K562 (cell line): ENCODE measurements at regions of chr10 and their contacts with region 1.

Region 1: GRCh38 chr10:931416-932318 is at the start of gene LARP4B:
- DNase-seq: peak; percentile 94 to 98 (median 97)
- ATAC-seq: peak; percentile 97
- H3K4me3 ChIP-seq: peak within 1 kb of the TSS; percentile 97
- H3K27ac ChIP-seq: peak within 1 kb of the TSS; percentile 85
- H3K4me1 ChIP-seq: peaks cover 18 to 21% of the 10 kb centered on the region in 2 experiments
- H3K27me3 ChIP-seq: no peaks in the 10 kb centered on the region
- CTCF ChIP-seq: no peak
- EP300 ChIP-seq: no peak
- POLR2A ChIP-seq: peak; percentile 75
- RAD21 ChIP-seq: no peak
- polyA plus RNA-seq, gene LARP4B: 11.8 to 21.0 TPM

Region 2: GRCh38 chr10:1056326-1057105 is 124.8 kb after region 1 on chr10 and contains the start of gene WDR37:
- CTCF ChIA-PET with region 1: no interaction called
- POLR2A ChIA-PET with region 1: no interaction called
- in situ Hi-C with region 1: no loop called
- intact Hi-C with region 1: loop called (anchors 10 kb)
- DNase-seq: peak; percentile 89 to 94 (median 92)
- ATAC-seq: peak; percentile 96
- H3K4me3 ChIP-seq: peak within 1 kb of the TSS; percentile 94
- H3K27ac ChIP-seq: peak within 1 kb of the TSS; percentile 97
- H3K4me1 ChIP-seq: peaks cover 12 to 15% of the 10 kb centered on the region in 2 experiments; a peak in 4 of 5 replicates
- H3K27me3 ChIP-seq: no peaks in the 10 kb centered on the region
- CTCF ChIP-seq: no peak
- EP300 ChIP-seq: no peak
- POLR2A ChIP-seq: peak; percentile 82
- RAD21 ChIP-seq: no peak; a peak in 1 of 4 replicates
- polyA plus RNA-seq, gene WDR37: 2.3 TPM